AG04450 (cell line): ENCODE measurements at regions of chr6 and their contacts with region 1.

Region 1: GRCh38 chr6:57221936-57222742 is at the start of gene RAB23:
- DNase-seq: peak; percentile 63
- H3K4me3 ChIP-seq: peak within 1 kb of the TSS; percentile 86
- H3K27ac ChIP-seq: peak within 1 kb of the TSS; percentile 67
- H3K27me3 ChIP-seq: no peaks in the 10 kb centered on the region
- CTCF ChIP-seq: no peak
- polyA plus RNA-seq, gene RAB23: 45.2 and 62.1 TPM in 2 replicates

Region 2: DNA sequence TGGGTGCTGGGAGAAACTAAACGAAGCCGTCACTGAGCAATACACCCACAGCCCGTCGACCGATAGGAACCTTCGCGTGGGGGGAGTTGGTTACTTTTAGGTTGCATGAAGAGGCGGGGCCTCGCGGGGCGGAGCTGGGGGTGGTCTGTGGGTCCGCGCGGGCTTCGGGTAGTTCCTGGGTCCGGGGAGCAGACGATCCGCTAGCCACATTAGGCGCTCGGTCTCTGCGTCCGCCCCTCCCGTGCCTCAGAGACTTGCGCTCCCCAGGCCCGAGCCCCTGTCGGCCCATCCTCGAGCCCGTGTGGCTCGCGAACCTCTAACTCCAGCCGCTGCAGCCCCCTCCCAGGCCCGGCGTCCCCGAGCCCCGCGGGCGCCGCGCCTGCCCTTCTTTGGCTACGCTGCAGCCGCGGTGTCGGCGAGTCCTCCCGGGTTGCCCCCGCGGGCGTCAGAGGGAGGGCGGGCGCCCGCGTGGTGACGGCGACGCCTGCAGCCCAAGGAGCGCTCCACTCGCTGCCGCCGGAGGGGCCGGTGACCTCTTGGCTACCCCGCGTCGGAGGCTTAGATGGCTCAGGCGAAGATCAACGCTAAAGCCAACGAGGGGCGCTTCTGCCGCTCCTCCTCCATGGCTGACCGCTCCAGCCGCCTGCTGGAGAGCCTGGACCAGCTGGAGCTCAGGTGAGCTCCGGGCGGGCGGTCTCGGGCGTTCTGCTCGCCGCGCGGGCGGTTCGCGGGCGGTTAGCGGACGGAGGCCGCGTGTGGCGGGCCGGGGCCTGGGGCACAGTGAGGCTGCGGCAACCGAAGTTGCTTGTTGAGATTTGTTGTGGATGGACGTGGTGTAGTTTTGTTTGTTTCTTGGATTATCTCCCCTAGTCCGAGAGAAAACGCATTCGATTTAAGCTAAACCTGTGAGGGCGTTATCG is 49.7 kb before region 1 on chr6 and contains the start of gene BAG2:
- CTCF ChIA-PET with region 1: no interaction called
- POLR2A ChIA-PET with region 1: interaction called, 14 read pairs
- DNase-seq: peak; percentile 75
- H3K4me3 ChIP-seq: peak within 1 kb of the TSS; percentile 86
- H3K27ac ChIP-seq: peak within 1 kb of the TSS; percentile 85
- H3K27me3 ChIP-seq: no peaks in the 10 kb centered on the region
- CTCF ChIP-seq: peak; percentile 6
- polyA plus RNA-seq, gene BAG2: 29.0 and 43.4 TPM in 2 replicates

Region 3: GRCh38 chr6:57267586-57268293 is 45.6 kb after region 1 on chr6:
- CTCF ChIA-PET with region 1: interaction called, 3 read pairs
- POLR2A ChIA-PET with region 1: interaction called, 11 read pairs
- DNase-seq: peak; percentile 96
- H3K4me3 ChIP-seq: no peak overlapping the region
- H3K27ac ChIP-seq: peak overlapping the region; percentile 80
- H3K27me3 ChIP-seq: no peaks in the 10 kb centered on the region
- CTCF ChIP-seq: peak; percentile 57